ENCODE measurements at regions of chr13 and their contacts with region 1.

Region 1: DNA sequence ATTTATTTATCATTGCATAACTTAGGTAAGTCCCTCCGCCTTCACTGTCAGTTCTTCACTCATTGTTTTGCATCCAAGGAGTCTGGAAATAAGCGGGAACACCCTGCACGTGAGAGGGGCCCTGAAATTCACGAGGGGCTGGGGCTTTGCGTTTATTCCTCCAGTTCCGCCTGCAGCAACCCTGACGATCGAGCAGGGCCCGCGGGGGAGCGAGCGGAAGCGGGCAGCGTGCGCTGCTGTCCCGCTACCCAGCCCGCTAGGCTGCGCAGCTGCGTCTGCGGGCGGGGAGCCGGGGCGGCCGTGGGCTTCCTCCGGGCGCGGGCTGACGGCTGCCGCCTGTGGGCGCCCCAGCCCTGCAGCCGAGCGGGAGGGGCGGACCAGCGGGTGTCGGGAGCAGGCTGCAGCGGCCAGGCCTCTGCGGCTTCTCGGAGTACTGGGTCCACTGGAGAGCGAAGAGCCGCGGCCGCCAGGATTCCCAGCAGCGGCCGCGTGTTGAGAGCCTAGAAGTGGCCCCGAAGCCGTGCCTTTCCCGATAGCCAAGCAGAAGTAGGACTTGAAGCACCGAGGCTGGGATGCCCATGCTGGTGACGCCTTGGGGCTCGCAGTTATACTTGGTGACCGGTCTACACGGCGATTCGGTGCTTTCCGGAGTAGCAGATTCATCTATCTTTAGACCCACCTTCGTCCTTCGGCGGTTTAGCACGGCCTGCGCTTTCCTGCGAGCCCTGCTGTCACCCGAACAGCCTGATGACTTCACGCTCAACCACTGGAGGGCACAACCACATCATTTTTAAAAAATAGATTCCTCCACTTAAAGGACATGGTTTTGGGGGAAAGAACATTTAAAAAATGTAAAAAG is 32.9 kb upstream of the SACS start:
- DNase-seq: peak; percentile 86

Region 2: DNA sequence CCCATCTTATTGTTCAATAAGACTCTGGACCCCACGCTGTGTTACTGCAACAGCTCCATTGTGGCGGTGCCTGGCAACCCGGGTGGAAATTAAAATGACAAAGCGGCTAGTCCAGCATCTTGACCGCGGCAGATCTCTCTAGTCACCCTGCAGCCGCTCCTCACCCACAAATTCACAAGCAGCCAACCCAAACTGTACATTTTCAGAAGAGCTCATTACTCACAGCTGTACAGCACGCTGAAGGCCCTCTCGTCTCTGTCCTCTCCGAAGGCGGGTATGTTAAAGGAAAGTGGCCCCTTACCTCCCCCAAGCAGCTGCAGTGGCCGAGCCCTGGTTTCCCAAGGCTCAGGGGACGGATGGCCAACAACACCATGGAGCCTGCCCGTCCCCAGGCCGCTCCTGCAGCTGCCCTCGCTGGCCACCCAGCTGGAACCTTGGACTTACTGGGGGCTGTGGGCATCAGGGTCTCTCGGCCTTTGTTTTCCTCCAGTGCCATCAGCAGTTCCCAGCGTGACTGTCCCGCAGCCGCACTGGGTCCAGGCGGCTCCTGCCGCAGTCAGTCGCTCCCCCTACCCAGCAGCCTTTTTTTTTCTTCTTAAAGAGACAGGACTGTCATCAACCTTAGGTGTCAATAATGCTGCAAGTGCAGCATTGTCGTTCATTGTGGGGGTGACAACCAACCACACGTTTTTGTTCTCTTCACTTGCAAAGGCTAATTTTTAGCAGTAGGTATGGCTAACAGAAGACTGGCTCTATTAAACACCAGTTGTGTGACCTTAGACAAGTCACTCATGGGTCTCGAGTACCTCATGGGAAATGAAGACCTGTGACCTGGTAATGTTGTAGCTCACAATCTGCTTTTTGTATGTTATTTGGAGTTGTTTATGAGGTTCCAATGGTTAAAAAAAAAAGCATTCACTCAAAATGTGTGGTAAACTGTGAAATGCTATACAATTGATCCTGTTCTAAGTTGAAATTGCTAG is 32.9 kb before region 1 on chr13 and contains the start of gene SACS:
- intact Hi-C with region 1: loop called (anchors 5 kb)
- DNase-seq: no peak
- total RNA-seq, gene SACS: 29.4 TPM

Region 3: GRCh38 chr13:23516702-23517101 is 50.3 kb after region 1 on chr13:
- intact Hi-C with region 1: loop called (anchors 5 kb)
- DNase-seq: no peak

Region 4: DNA sequence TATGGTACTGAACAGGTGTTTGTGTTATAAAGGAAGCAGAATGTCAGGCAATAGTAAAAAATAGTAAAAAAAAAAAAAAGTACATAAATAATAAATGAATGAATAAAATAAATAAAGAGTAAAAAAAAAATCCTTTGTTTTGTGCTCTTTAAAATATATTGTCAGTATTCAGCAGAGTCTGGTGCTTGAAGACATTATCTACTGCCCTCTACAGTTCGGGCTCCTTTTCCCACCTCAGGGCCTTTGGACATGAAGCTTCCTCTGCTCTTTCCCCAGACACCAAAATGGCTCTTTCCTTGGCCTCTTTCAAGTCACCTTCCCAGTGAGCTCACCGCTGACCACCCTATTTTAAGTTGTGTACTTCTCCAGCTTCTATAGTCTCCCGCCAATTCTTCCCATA is 241.3 kb after region 1 on chr13:
- intact Hi-C with region 1: loop called (anchors 10 kb)
- DNase-seq: no peak

Region 5: DNA sequence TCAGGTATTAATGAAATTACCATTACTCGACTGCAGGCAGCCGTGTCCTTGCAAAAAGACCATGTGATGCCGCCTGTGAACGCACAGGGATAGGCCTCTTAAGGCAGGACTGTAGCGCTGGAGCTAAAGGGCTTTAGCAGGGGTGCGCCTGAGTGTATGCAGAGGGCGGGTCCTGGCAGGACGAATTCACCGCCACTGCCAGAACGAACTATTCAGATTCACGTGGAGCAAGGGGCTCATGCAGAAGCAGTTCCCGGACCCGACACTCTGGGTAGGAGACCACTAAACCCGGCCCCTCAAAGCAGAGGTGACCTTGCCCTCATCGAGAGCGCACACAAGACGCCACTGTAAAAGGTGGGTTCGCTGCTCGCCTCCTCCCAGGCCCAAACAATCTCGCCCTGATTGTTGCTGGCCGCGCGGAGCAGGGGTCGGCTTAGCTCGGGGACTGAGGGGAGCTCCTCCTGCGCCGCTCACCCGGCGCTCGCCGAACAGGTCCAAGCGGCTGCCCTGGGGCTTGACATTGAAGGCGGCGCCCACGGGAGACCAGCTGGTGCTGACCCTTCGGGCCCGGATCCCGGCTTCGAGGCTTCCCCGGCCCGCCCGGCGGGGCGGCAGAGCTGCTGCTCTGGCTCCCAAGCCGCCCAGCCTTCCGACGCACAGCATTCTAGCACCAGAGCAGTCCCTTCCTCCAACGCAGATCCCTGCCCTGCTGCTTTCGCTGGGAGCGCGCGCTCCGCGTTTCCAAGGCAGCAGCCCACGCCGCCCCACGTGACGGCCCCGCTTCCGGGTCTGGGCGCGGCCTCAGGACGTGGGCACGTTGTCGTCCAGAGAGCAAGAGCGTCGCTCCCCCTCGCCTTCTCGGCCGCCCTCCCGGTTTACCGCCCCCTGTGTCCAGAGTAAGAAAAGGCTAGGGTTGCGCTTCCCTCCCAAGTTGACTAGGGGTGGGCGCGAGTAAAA is 422.6 kb after region 1 on chr13 and contains the start of gene MIPEP:
- intact Hi-C with region 1: loop called (anchors 5 kb)
- DNase-seq: peak; percentile 95
- total RNA-seq, gene MIPEP: 30.4 TPM